Ovary (tissue), 10 donors: ENCODE measurements at regions of chr11 and their contacts with region 1.

Region 1: GRCh38 chr11:74739546-74740270 is 8.5 kb upstream of the CHRDL2 start:
- DNase-seq: peak in 3 of 5 donors; percentile 51 to 54 (median 52)
- H3K4me3 ChIP-seq: no peak overlapping the region
- H3K27ac ChIP-seq: no peak overlapping the region
- H3K4me1 ChIP-seq: no peaks in the 10 kb centered on the region
- H3K27me3 ChIP-seq: no peaks in the 10 kb centered on the region
- CTCF ChIP-seq: peak; percentile 55 to 67 (median 56)
- EP300 ChIP-seq: no peak
- POLR2A ChIP-seq: no peak

Region 2: GRCh38 chr11:74466916-74467885 is 272.5 kb before region 1 on chr11 and contains the start of gene KCNE3:
- intact Hi-C with region 1: no loop called
- DNase-seq: peak; percentile 71 to 82 (median 75)
- H3K4me3 ChIP-seq: peak within 1 kb of the TSS; percentile 64
- H3K27ac ChIP-seq: peak within 1 kb of the TSS; percentile 72 to 80
- H3K4me1 ChIP-seq: peaks cover 6% of the 10 kb centered on the region
- H3K27me3 ChIP-seq: no peaks in the 10 kb centered on the region
- CTCF ChIP-seq: no peak
- EP300 ChIP-seq: no peak
- POLR2A ChIP-seq: no peak
- total RNA-seq, gene KCNE3: 3.1 to 19.9 (median 16.0) TPM

Region 3: GRCh38 chr11:74602637-74603556 is 136.8 kb before region 1 on chr11:
- intact Hi-C with region 1: loop called in 1 of 4 experiments (anchors 10 kb)
- DNase-seq: no peak
- H3K4me3 ChIP-seq: no peak overlapping the region
- H3K27ac ChIP-seq: no peak overlapping the region
- H3K4me1 ChIP-seq: no peaks in the 10 kb centered on the region
- H3K27me3 ChIP-seq: no peaks in the 10 kb centered on the region
- CTCF ChIP-seq: no peak
- EP300 ChIP-seq: no peak
- POLR2A ChIP-seq: no peak

Region 4: GRCh38 chr11:74780248-74781005 is 40.7 kb after region 1 on chr11:
- intact Hi-C with region 1: no loop called
- DNase-seq: no peak
- H3K4me3 ChIP-seq: no peak overlapping the region
- H3K27ac ChIP-seq: no peak overlapping the region
- H3K4me1 ChIP-seq: peaks cover 5% of the 10 kb centered on the region
- H3K27me3 ChIP-seq: no peaks in the 10 kb centered on the region
- CTCF ChIP-seq: no peak
- EP300 ChIP-seq: no peak
- POLR2A ChIP-seq: no peak